ENCODE measurements at regions of chr12 and their contacts with region 1.

Region 1: GRCh38 chr12:42589465-42590329 is at the start of gene PRICKLE1:
- DNase-seq: peak; percentile 67
- ATAC-seq: peak; percentile 81
- H3K4me3 Mint-ChIP-seq: peak within 1 kb of the TSS; percentile 87
- H3K27ac Mint-ChIP-seq: peak within 1 kb of the TSS; percentile 24
- H3K4me1 Mint-ChIP-seq: peaks cover 18% of the 10 kb centered on the region
- H3K27me3 Mint-ChIP-seq: peaks cover 55% of the 10 kb centered on the region
- CTCF ChIP-seq: no peak
- total RNA-seq, gene PRICKLE1: 4.5 and 5.4 TPM in 2 replicates

Region 2: DNA sequence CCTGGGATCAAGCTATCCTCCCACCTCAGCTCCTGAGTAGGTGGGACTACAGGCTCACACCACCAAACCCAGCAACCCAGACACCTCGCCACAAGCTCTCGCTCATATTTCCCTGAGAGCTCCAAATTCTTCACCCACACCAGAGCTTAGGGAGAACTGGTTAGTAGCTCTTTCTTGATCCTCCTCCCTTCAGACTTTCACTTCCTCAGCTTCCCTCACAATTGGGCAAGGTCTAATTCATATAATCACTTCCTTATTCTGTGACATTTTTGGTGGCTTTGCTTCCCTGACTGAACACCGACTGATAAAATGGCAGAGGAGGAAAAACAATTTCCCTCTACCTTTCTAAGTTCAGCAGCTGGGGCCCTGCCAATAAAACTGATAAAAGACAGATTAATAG is 533.6 kb before region 1 on chr12:
- CTCF ChIA-PET with region 1: no interaction called
- POLR2A ChIA-PET with region 1: no interaction called
- intact Hi-C with region 1: loop called (anchors 5 kb)
- DNase-seq: no peak
- ATAC-seq: peak; percentile 97
- H3K4me3 Mint-ChIP-seq: no peak overlapping the region
- H3K27ac Mint-ChIP-seq: peak overlapping the region; percentile 38
- H3K4me1 Mint-ChIP-seq: peaks cover 15% of the 10 kb centered on the region
- H3K27me3 Mint-ChIP-seq: peaks cover 16% of the 10 kb centered on the region
- CTCF ChIP-seq: no peak